Activated CD4-positive, alpha-beta T cell treated with anti-CD3 and anti-CD28 coated beads, Interleukin-2, amount 10 ng/mL, durations not matched to agents 7 days and 5 days (primary cell): ENCODE measurements at regions of chr4 and their contacts with region 1.

Region 1: DNA sequence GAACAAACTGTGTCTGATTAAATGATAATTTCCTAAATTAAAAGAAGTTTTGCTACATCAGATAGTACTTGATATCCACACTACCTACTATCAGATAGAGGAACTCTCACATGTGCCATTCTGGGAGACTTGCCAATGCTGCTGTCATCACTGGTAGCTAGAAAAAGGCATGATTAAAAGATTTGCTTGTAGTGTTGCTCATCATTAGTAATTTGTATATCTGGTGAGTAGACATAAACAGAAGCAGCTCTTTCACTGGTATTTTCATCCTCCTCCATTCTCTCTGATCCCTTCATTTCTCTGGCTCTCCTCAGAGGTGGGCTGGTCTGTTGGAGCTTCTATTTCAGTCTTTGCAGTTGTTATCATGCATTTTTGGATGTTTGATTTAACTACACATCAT is 56.0 kb downstream of the SPRY1 start:
- DNase-seq: no peak
- H3K4me3 Mint-ChIP-seq: no peak overlapping the region
- H3K27ac Mint-ChIP-seq: no peak overlapping the region
- H3K4me1 Mint-ChIP-seq: peaks cover 22% of the 10 kb centered on the region
- H3K27me3 Mint-ChIP-seq: no peaks in the 10 kb centered on the region

Region 2: GRCh38 chr4:123547216-123548165 is 94.9 kb after region 1 on chr4:
- CTCF ChIA-PET with region 1: no interaction called
- POLR2A ChIA-PET with region 1: interaction called, 10 read pairs
- DNase-seq: no peak
- H3K4me3 Mint-ChIP-seq: no peak overlapping the region
- H3K27ac Mint-ChIP-seq: no peak overlapping the region
- H3K4me1 Mint-ChIP-seq: no peaks in the 10 kb centered on the region
- H3K27me3 Mint-ChIP-seq: peaks cover 2% of the 10 kb centered on the region